RWPE1 (cell line): ENCODE measurements at regions of chr2 and their contacts with region 1.

Region 1: GRCh38 chr2:171515672-171516298 is 6.5 kb upstream of the CYBRD1 start:
- DNase-seq: peak; percentile 26
- H3K27ac ChIP-seq: no peak overlapping the region
- CTCF ChIP-seq: no peak

Region 2: GRCh38 chr2:171547720-171548119 is 31.9 kb after region 1 on chr2:
- CTCF ChIA-PET with region 1: no interaction called
- POLR2A ChIA-PET with region 1: no interaction called
- DNase-seq: no peak
- H3K27ac ChIP-seq: no peak overlapping the region
- CTCF ChIP-seq: no peak

Region 3: GRCh38 chr2:171568089-171568488 is 52.3 kb after region 1 on chr2:
- CTCF ChIA-PET with region 1: no interaction called
- POLR2A ChIA-PET with region 1: no interaction called
- DNase-seq: no peak
- H3K27ac ChIP-seq: no peak overlapping the region
- CTCF ChIP-seq: no peak

Region 4: GRCh38 chr2:171578127-171578803 is 62.5 kb after region 1 on chr2:
- CTCF ChIA-PET with region 1: no interaction called
- POLR2A ChIA-PET with region 1: interaction called, 12 read pairs
- DNase-seq: no peak
- H3K27ac ChIP-seq: no peak overlapping the region
- CTCF ChIP-seq: no peak